Naive thymus-derived CD4-positive, alpha-beta T cell (primary cell): ENCODE measurements at regions of chr18 and their contacts with region 1.

Region 1: GRCh38 chr18:12947355-12948041 is at the start of gene SEH1L:
- DNase-seq: peak in 7 of 9 donors; percentile 95 to 99 (median 97)
- ATAC-seq: peak; percentile 94
- H3K4me3 ChIP-seq: peak within 1 kb of the TSS; percentile 78
- H3K4me3 Mint-ChIP-seq: peak within 1 kb of the TSS; percentile 89 to 98 (median 95)
- H3K27ac ChIP-seq: peak within 1 kb of the TSS; percentile 92
- H3K27ac Mint-ChIP-seq: peak within 1 kb of the TSS; percentile 93 to 99 (median 97)
- H3K4me1 ChIP-seq: peaks cover 13 to 15% of the 10 kb centered on the region in 2 donors
- H3K4me1 Mint-ChIP-seq: peaks cover 15 to 51% (median 42%) of the 10 kb centered on the region in 7 donors
- H3K27me3 ChIP-seq: no peaks in the 10 kb centered on the region
- H3K27me3 Mint-ChIP-seq: no peaks in the 10 kb centered on the region
- total RNA-seq, gene SEH1L: 32.7 to 54.2 (median 34.2) TPM

Region 2: DNA sequence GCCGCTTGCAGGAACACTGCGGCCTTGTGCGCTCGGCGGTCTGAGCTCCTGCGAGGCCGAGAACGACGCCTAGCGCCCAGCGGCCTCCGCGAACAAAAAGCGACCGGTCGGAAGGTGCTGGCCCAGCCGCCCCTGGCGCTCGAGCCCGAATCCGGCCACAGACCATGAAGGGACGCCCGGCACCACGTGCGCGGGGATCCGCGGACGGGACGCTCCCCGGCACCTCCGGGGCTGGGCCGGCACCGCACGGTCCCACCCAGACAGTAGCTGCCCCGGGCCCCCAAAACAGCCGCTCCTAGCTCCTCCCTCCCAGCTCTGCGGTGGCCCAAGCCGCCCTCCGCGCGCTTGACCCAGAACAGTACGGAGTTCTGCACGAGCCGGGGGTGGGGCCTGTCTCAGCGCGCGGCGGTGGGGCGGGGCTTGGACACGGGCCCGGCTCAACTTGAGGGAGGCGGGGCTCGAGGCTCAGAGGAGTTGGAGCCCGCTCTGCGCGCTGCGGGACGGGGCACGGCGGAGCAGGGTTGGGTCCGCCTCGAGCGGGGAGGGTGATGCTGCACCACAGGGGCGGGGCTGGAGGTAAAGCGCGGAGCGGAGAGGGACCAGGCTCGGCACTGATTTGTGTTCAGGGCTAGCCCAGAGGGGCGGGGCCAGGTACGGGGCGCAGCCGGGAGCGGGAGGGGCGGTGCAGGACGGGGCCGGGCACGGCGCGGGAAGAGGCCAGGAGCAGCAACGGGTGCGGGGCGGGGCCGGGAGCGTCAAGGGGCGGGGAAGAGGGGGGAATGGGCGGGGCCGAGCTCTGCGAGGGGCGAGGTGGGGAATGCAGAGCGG is 966.7 kb before region 1 on chr18:
- CTCF ChIA-PET with region 1: no interaction called
- POLR2A ChIA-PET with region 1: no interaction called
- intact Hi-C with region 1: loop called in 1 of 2 experiments (anchors 2 kb)
- DNase-seq: peak; percentile 86 to 98 (median 92)
- ATAC-seq: peak; percentile 95
- H3K4me3 ChIP-seq: peak overlapping the region; percentile 64
- H3K4me3 Mint-ChIP-seq: peak overlapping the region; percentile 62 to 89 (median 86)
- H3K27ac ChIP-seq: peak overlapping the region; percentile 56
- H3K27ac Mint-ChIP-seq: peak overlapping the region in 7 of 9 donors; percentile 26 to 80 (median 44)
- H3K4me1 ChIP-seq: peaks cover 0 to 5% of the 10 kb centered on the region in 2 donors
- H3K4me1 Mint-ChIP-seq: peaks cover 0 to 27% (median 13%) of the 10 kb centered on the region in 7 donors
- H3K27me3 ChIP-seq: no peaks in the 10 kb centered on the region
- H3K27me3 Mint-ChIP-seq: peaks cover 0 to 17% (median 0%) of the 10 kb centered on the region in 5 donors

Region 3: DNA sequence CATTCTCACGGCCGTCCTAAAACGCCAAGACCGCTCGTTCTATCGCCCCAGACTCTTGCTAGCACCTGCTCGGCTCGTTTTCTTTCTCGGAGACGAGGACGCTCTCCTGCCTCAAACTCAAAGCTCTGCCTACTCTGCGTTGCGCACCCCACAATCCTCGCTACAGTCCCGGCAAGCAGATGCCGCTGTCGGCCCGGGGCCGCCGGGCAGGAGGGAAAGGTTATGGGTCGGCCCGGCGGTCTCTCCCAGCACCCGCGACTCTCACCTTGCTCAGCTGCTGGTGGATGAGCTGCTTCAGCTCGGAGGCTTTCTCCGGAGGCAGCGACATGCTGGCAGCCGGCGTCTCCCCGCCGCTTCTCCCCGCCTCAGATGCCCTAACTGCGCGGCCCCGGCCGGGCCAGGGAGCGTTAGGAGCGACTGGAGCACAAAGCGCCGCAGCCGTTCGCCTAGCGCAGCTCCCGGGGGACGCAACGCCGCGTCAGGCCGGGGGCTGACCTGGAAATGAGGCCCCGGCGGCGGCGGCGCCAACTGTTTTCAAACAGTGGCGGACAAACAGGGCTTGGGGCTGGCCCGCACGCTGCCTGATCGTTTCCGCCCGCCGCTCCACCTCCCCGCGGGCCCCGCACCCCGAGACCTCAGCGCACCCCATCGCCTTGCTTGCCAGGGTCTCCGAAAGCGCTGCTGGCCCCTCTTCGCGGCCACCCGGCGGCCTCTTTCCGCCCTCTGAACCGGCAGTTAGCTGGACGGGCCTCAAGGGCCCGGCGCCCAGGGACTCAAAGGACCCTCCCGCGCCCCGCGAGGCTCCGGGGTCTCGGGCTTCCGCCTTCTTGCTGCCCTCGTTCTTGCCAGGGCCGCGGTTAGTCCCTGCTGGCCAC is 245.0 kb before region 1 on chr18 and contains the starts of genes CEP76 and PSMG2:
- CTCF ChIA-PET with region 1: interaction called, 4 read pairs
- POLR2A ChIA-PET with region 1: interaction called, 13 read pairs
- intact Hi-C with region 1: loop called (anchors 1 kb)
- DNase-seq: peak; percentile 77 to 88 (median 84)
- ATAC-seq: peak; percentile 89
- H3K4me3 ChIP-seq: peak within 1 kb of the TSS; percentile 97
- H3K4me3 Mint-ChIP-seq: peak within 1 kb of the TSS; percentile 92 to 99 (median 98)
- H3K27ac ChIP-seq: peak within 1 kb of the TSS; percentile 96
- H3K27ac Mint-ChIP-seq: peak within 1 kb of the TSS; percentile 91 to 100 (median 96)
- H3K4me1 ChIP-seq: peaks cover 17 to 20% of the 10 kb centered on the region in 2 donors
- H3K4me1 Mint-ChIP-seq: peaks cover 36 to 63% (median 50%) of the 10 kb centered on the region in 7 donors
- H3K27me3 ChIP-seq: no peaks in the 10 kb centered on the region
- H3K27me3 Mint-ChIP-seq: no peaks in the 10 kb centered on the region
- total RNA-seq, gene CEP76: 6.9 to 13.2 (median 11.1) TPM
- total RNA-seq, gene PSMG2: 49.9 to 104 (median 59.9) TPM

Region 4: GRCh38 chr18:12904012-12904516 is 43.4 kb before region 1 on chr18:
- CTCF ChIA-PET with region 1: no interaction called
- POLR2A ChIA-PET with region 1: no interaction called
- intact Hi-C with region 1: loop called in 1 of 2 experiments (anchors 1 kb)
- DNase-seq: peak in 2 of 9 donors; percentile 27 to 49
- ATAC-seq: peak; percentile 37
- H3K4me3 ChIP-seq: no peak overlapping the region
- H3K4me3 Mint-ChIP-seq: peak overlapping the region in 9 of 10 donors; percentile 34 to 78 (median 69)
- H3K27ac ChIP-seq: no peak overlapping the region
- H3K27ac Mint-ChIP-seq: peak overlapping the region in 7 of 9 donors; percentile 16 to 92 (median 82)
- H3K4me1 ChIP-seq: peaks cover 0 to 9% of the 10 kb centered on the region in 2 donors
- H3K4me1 Mint-ChIP-seq: peaks cover 0 to 8% (median 7%) of the 10 kb centered on the region in 7 donors
- H3K27me3 ChIP-seq: no peaks in the 10 kb centered on the region
- H3K27me3 Mint-ChIP-seq: peaks cover 0 to 26% (median 0%) of the 10 kb centered on the region in 5 donors

Region 5: DNA sequence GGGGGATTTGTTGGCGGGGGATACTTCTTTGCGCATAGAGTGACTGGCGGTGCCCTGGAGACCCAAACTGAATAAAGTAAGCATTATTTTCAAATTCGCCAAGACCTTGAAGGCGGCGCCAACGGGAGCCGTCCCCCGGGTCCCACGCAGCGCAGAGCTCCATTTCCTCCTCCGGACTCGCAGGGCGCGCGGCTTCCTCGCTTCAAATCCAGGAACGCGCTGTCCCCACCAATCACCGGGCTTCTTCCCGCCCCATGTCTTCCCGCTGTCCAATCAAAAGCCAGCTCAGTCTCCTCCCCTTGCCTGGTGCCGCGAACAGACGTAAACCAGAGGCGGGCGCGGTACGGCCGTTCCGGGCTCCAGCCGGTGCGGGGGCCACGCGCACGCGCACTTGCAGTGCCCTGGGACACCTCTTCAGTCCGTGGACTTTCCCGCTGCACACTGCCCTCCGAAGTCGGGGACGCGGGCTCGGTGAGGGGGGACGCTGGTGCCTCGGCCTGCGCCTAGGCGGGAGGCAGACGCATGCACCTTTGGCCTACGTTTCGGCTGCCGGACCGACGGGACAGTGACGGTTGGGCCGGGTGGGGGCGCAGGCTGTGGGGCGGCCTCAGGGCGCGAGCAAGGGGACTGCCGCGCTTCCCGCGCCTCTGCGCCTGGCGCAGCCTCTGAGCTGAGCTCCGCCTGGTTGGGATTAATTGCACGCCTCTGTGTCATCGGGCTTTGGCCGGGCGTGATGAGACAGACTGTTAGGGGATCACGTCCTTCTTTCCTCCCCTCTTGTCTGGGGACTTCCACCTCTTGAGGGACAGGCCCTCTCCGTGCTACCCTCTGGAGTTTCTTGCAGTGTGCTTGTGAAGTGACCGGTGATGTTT is 43.7 kb after region 1 on chr18 and contains the start of gene CEP192:
- CTCF ChIA-PET with region 1: no interaction called
- POLR2A ChIA-PET with region 1: interaction called, 15 read pairs
- intact Hi-C with region 1: loop called (anchors 1 kb)
- DNase-seq: peak; percentile 90 to 99 (median 97)
- ATAC-seq: peak; percentile 99
- H3K4me3 ChIP-seq: peak within 1 kb of the TSS; percentile 85
- H3K4me3 Mint-ChIP-seq: peak within 1 kb of the TSS in 9 of 10 donors; percentile 90 to 99 (median 98)
- H3K27ac ChIP-seq: peak within 1 kb of the TSS; percentile 82
- H3K27ac Mint-ChIP-seq: peak within 1 kb of the TSS; percentile 88 to 97 (median 93)
- H3K4me1 ChIP-seq: peaks cover 27 to 29% of the 10 kb centered on the region in 2 donors
- H3K4me1 Mint-ChIP-seq: peaks cover 10 to 29% (median 20%) of the 10 kb centered on the region in 7 donors
- H3K27me3 ChIP-seq: no peaks in the 10 kb centered on the region
- H3K27me3 Mint-ChIP-seq: peaks cover 0 to 1% (median 0%) of the 10 kb centered on the region in 5 donors
- total RNA-seq, gene CEP192: 30.9 to 45.0 (median 39.7) TPM

Region 6: DNA sequence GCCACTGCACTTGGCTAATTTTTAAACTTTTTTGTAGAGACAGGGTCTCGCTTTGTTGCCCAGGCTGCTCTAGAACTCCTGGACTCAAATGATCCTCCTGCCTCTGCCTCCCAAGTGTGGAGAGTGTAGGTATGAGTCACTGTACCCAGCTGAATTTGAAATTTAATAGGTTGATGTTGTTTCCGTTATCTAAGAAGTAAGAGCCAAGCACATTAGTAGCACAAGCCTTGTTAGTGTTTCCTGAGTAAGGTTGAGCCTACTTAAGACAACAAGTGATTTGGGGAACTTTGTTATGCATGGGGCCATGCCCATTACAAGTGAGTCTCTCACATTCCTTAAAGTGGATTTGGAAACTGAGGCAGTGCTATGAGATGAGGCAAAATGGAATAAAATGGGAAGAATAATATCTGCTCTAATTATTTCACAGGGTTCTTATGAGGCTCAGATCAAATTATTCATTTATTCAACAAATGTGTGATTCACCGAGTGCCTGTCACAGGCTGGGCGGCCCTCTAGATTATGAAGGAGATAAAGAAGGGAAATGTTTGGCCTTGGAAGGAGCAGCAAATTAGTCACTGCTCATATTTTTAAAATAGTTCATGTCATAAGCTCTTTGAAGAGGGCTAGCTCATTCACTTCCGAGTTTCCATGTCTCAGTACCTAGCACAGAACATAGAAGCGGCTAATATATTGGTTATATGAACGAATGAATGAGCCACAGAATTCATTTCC is 488.3 kb after region 1 on chr18:
- CTCF ChIA-PET with region 1: no interaction called
- POLR2A ChIA-PET with region 1: no interaction called
- intact Hi-C with region 1: loop called in 1 of 2 experiments (anchors 5 kb)
- DNase-seq: no peak
- ATAC-seq: no peak
- H3K4me3 ChIP-seq: no peak overlapping the region
- H3K4me3 Mint-ChIP-seq: peak overlapping the region in 8 of 10 donors; percentile 12 to 91 (median 31)
- H3K27ac ChIP-seq: no peak overlapping the region
- H3K27ac Mint-ChIP-seq: peak overlapping the region in 8 of 9 donors; percentile 6 to 95 (median 92)
- H3K4me1 ChIP-seq: peaks cover 12 to 43% of the 10 kb centered on the region in 2 donors
- H3K4me1 Mint-ChIP-seq: peaks cover 31 to 65% (median 57%) of the 10 kb centered on the region in 7 donors
- H3K27me3 ChIP-seq: no peaks in the 10 kb centered on the region
- H3K27me3 Mint-ChIP-seq: no peaks in the 10 kb centered on the region